HEK293 (cell line): ENCODE measurements at regions of chr9 and their contacts with region 1.

Region 1: GRCh38 chr9:70639853-70640814 is 225.7 kb upstream of the KLF9 start:
- H3K4me3 ChIP-seq: no peak overlapping the region
- H3K27ac ChIP-seq: no peak overlapping the region
- H3K4me1 ChIP-seq: no peaks in the 10 kb centered on the region
- CTCF ChIP-seq: peak; percentile 37; the same call in 1 of the 2 replicates

Region 2: DNA sequence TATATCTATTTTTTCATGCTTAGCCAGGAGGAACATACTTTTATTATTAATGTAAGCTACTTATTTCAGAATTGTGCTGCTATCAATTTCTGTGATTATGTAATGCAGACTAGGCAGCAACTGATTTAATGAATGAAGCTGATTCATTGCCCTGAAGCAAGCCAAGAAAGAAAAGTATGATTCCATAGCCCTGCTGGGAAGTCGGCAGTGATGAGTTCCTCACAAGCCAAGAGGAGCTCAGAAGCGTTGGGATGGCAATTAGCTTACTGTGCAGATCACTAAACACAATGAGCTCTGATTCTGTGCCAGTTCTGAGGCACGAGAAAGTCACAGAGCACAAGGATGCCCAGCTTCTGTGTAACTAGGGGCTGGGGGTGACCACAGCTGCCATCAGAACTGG is 28.6 kb after region 1 on chr9:
- CTCF ChIA-PET with region 1: interaction called, 3 read pairs
- POLR2A ChIA-PET with region 1: interaction called, 16 read pairs
- H3K4me3 ChIP-seq: no peak overlapping the region
- H3K27ac ChIP-seq: no peak overlapping the region
- H3K4me1 ChIP-seq: no peaks in the 10 kb centered on the region
- CTCF ChIP-seq: no peak

Region 3: GRCh38 chr9:71001780-71002386 is 361.7 kb after region 1 on chr9:
- CTCF ChIA-PET with region 1: interaction called, 11 read pairs
- POLR2A ChIA-PET with region 1: no interaction called
- H3K4me3 ChIP-seq: no peak overlapping the region
- H3K27ac ChIP-seq: no peak overlapping the region
- H3K4me1 ChIP-seq: no peaks in the 10 kb centered on the region
- CTCF ChIP-seq: 0 out of 2 replicates have a peak, but pooled peaks have one; percentile 31

Region 4: GRCh38 chr9:71249729-71250317 is 609.7 kb after region 1 on chr9:
- CTCF ChIA-PET with region 1: interaction called, 109 read pairs
- POLR2A ChIA-PET with region 1: no interaction called
- H3K4me3 ChIP-seq: no peak overlapping the region
- H3K27ac ChIP-seq: no peak overlapping the region
- H3K4me1 ChIP-seq: no peaks in the 10 kb centered on the region
- CTCF ChIP-seq: peak; percentile 71

Region 5: DNA sequence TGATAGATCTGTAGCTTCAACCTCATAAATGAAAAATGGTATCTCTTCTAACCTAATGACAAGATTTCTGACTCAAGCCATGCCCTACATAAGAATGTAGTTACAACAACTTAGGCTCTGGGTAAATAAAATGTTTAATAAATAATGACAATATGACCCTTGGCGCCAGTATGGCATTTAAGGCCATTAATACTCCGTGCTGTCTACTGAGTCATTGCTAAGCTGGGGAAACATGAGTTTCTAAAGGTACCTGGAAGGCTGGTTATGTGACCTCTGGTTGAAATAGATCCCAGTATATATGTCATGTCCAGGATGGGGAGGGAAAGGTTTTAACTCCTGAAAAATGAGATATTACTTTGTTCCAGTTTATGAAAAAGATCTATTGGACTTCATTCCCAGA is 1186.2 kb after region 1 on chr9:
- CTCF ChIA-PET with region 1: no interaction called
- POLR2A ChIA-PET with region 1: no interaction called
- H3K4me3 ChIP-seq: no peak overlapping the region
- H3K27ac ChIP-seq: no peak overlapping the region
- H3K4me1 ChIP-seq: no peaks in the 10 kb centered on the region
- CTCF ChIP-seq: no peak